Activated CD8-positive, alpha-beta memory T cell treated with anti-CD3 and anti-CD28 coated beads, Interleukin-2, amount 10 ng/mL, durations not matched to agents 7 days and 5 days (primary cell): ENCODE measurements at regions of chr2 and their contacts with region 1.

Region 1: DNA sequence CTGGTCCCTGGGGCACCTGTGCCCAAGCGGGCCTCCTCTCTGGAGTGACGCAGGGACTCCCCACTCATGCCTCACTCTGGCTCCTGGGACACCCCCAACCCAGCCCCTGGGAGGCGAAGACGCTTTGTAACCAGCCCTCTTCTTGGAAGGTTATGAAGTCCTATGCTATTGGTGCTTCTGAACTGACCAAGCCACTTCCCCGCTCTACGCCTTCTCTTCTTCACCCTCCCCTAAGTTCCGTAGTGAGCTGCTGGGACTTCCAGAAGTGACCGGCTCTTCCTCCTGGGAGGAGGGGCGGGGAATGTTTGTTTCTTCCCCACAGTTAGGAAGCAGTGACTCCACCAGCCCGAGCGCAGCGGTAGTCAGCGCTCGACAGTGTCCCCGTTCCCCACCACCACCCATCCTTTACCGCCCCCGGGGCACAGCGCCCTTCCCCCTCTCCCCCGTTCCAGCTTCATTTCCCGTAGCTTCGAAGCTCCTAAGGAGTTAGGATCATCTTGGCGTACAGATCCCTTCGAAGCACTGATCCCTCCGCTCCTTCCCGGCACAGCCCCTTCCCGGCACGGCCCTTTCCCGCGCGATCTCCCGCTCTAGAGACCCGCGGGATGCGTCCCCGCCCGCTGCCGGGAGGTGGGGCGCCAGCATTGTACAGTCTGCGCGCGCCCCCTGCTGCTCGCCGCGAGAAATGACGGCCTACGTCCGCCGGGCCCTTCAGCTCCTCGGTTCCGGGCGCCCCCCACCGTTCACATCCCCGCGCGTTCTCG is 25.3 kb upstream of the NOTO start:
- DNase-seq: peak; percentile 90
- ATAC-seq: peak; percentile 92
- H3K4me3 Mint-ChIP-seq: peak overlapping the region; percentile 76
- H3K27ac Mint-ChIP-seq: no peak overlapping the region
- H3K4me1 Mint-ChIP-seq: peaks cover 17% of the 10 kb centered on the region
- H3K27me3 Mint-ChIP-seq: peaks cover 67% of the 10 kb centered on the region

Region 2: DNA sequence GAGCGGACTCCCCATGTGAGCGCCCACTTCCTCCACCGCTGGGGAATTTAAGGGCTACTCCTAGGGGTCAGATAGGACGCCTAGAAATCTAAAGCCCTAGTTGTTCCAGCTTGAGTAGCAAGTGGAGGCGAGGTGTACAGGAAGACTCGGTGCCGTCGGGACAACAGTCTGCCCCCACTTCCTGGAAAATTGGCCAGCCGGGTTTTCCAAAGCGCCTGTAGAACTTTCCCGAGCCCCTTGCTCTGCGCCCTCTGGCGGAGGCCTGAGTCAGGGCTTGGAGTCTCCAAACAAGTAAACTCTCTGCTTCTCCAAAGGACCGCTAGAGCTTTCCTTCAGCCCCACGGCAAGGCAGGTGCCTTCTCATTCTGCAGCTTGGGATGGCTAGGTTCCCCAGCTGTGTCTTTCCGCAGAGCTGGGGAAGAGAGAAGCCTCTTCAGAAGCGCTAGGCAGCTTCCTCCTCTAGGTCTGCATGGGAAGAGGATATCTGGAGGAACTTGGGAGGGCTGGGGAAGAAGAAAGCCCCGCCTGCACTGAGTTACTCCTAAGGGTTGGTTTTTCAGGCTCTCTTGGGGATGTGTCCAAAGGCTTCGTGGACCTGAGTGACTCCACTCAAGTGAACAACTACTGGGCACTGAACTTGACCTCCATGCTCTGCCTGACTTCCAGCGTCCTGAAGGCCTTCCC is 289.2 kb before region 1 on chr2:
- CTCF ChIA-PET with region 1: interaction called, 74 read pairs
- DNase-seq: peak; percentile 69
- ATAC-seq: peak; percentile 52
- H3K4me3 Mint-ChIP-seq: peak overlapping the region; percentile 50
- H3K27ac Mint-ChIP-seq: no peak overlapping the region
- H3K4me1 Mint-ChIP-seq: peaks cover 6% of the 10 kb centered on the region
- H3K27me3 Mint-ChIP-seq: peaks cover 47% of the 10 kb centered on the region

Region 3: GRCh38 chr2:72993147-72993932 is 183.7 kb before region 1 on chr2:
- CTCF ChIA-PET with region 1: interaction called, 66 read pairs
- DNase-seq: peak; percentile 49
- ATAC-seq: peak; percentile 56
- H3K4me3 Mint-ChIP-seq: no peak overlapping the region
- H3K27ac Mint-ChIP-seq: no peak overlapping the region
- H3K4me1 Mint-ChIP-seq: no peaks in the 10 kb centered on the region
- H3K27me3 Mint-ChIP-seq: no peaks in the 10 kb centered on the region

Region 4: DNA sequence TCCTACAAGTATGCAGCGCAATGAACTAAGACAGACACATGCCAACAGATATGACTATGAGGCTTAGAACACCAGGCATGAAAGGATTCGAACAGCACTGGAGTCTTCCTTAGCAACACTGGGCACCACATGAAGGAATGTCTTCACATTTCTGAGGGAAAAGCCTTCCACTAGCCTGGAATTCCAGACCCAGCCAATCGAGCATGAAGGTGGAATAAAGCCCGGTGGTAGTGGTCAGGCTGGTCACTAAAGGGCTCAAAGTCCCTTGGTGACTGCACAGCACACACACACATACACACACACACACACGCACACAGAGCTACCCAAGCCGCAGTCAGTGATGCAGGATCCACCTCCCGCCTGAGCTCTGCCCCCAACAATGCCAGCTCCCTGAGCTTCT is 85.9 kb before region 1 on chr2:
- CTCF ChIA-PET with region 1: interaction called, 67 read pairs
- DNase-seq: no peak
- ATAC-seq: no peak
- H3K4me3 Mint-ChIP-seq: no peak overlapping the region
- H3K27ac Mint-ChIP-seq: no peak overlapping the region
- H3K4me1 Mint-ChIP-seq: no peaks in the 10 kb centered on the region
- H3K27me3 Mint-ChIP-seq: no peaks in the 10 kb centered on the region

Region 5: GRCh38 chr2:73187549-73187948 is 10.5 kb after region 1 on chr2:
- CTCF ChIA-PET with region 1: interaction called, 28 read pairs
- DNase-seq: no peak
- ATAC-seq: no peak
- H3K4me3 Mint-ChIP-seq: no peak overlapping the region
- H3K27ac Mint-ChIP-seq: no peak overlapping the region
- H3K4me1 Mint-ChIP-seq: no peaks in the 10 kb centered on the region
- H3K27me3 Mint-ChIP-seq: peaks cover 33% of the 10 kb centered on the region

Region 6: DNA sequence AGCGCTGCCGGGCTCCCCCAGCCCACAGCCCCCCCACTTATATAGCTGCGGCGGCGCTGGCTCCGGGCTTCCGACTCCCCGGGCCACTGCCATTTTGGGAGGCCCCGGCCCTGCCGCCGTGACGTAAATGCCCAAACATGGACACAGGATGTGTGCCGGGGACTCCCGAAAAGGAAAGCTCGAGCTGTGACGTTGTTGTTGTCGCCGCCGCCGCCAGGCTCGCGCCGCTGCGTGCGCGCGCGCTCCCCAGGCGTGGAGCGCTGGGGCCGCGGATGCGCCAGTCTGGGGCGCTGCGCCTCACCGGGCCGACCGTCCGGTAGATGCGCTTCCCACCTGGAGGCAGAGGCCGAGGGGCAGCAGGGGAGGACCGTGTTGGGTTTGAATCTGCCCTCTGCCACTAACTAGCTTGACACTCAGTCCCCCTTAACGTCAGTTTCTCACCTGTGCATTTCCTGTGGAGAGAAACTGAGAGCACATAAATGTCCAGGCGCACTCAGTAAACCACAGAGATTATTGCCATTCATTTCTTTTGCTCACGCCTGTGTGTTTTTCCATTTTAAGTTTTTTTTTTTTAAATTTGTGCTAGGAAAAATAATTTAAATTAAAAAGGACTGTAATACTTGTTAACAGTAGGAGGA is 116.6 kb after region 1 on chr2 and contains the start of gene EGR4:
- CTCF ChIA-PET with region 1: interaction called, 21 read pairs
- DNase-seq: peak; percentile 94
- ATAC-seq: peak; percentile 95
- H3K4me3 Mint-ChIP-seq: peak within 1 kb of the TSS; percentile 71
- H3K27ac Mint-ChIP-seq: no peak within 1 kb of the TSS
- H3K4me1 Mint-ChIP-seq: peaks cover 16% of the 10 kb centered on the region
- H3K27me3 Mint-ChIP-seq: peaks cover 88% of the 10 kb centered on the region
- total RNA-seq, gene EGR4: 0.09 to 0.15 TPM

Region 7: GRCh38 chr2:73468376-73468775 is 291.3 kb after region 1 on chr2:
- CTCF ChIA-PET with region 1: no interaction called
- DNase-seq: no peak
- ATAC-seq: no peak
- H3K4me3 Mint-ChIP-seq: no peak overlapping the region
- H3K27ac Mint-ChIP-seq: no peak overlapping the region
- H3K4me1 Mint-ChIP-seq: no peaks in the 10 kb centered on the region
- H3K27me3 Mint-ChIP-seq: no peaks in the 10 kb centered on the region